Cardiac septum (tissue), 1 donor: ENCODE measurements at regions of chr7 and their contacts with region 1.

Region 1: GRCh38 chr7:129825496-129826267 is 127.1 kb downstream of the UBE2H start:
- DNase-seq: peak; percentile 96

Region 2: GRCh38 chr7:129611246-129612111 is 214.2 kb before region 1 on chr7 and contains the start of gene NRF1:
- intact Hi-C with region 1: loop called (anchors 2 kb)
- DNase-seq: peak; percentile 96
- total RNA-seq, gene NRF1: 17.0 TPM

Region 3: GRCh38 chr7:129862682-129863081 is 37.0 kb after region 1 on chr7:
- intact Hi-C with region 1: loop called (anchors 2 kb)
- DNase-seq: no peak

Region 4: DNA sequence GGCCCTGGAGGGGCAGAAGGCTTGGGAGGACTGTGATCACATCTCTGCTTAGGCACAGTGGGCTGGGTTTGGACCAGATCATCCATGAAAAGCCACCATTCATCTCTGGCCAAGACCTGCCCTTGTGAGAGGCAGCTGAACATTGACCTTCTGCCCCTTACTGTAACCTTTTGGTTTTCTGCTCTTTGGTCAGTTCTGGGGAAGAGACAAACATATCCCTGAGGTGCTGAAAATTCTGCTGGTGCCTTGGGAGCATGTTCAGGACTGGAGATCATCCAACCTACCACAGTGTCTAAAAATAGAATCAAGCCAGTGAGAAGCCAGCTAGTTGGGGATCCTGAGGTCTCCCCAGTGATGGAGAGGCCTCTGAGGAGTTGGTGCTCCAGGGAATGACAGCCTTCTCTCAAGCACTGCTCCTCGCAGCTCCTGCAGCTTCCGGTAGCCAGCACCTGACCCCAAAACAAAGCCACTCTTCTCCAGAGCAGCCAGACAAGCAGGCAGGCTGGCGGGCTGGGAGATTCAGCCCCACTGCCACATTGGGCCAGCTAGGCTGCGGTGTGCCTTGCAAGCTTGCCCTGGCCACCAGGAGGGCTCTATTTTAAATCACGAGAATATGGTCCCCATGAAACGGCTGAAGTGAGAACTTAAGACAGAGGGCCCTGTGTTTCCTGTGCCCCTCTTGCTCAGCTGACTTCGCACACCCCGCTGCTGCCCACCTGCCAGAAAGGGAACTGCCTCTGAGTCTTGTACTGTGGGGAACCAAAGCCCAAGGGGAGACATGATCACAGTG is 164.9 kb after region 1 on chr7:
- intact Hi-C with region 1: loop called (anchors 5 kb)
- DNase-seq: no peak